Mammary epithelial cell (primary cell): ENCODE measurements at regions of chr12 and their contacts with region 1.

Region 1: DNA sequence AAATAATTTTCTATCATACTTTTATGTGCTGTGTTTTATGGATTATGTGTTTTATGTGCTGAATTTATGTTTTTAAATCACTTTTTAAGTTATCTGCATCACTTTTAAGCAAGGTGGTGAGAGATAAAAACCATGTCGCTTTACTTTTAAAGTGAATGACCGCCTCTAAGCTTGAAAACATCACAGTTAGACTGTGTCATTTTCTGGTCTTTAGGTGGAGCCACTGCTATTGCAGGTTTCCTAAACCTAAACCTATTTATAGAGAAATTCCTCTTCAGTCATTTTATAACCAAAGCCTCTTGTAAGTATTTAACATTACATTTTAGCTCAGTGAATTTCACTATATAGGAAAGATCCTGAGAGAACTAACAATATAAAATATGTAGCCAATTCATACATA is 21.0 kb upstream of the MDM2 start:
- DNase-seq: no peak
- H3K4me3 ChIP-seq: no peak overlapping the region
- H3K27ac ChIP-seq: peak overlapping the region; percentile 80
- H3K4me1 ChIP-seq: peaks cover 47% of the 10 kb centered on the region
- H3K27me3 ChIP-seq: no peaks in the 10 kb centered on the region
- CTCF ChIP-seq: peak in 1 of 2 donors; percentile 16

Region 2: GRCh38 chr12:68745904-68746571 is 40.9 kb before region 1 on chr12 and contains the start of gene SLC35E3:
- CTCF ChIA-PET with region 1: no interaction called
- dilution Hi-C with region 1: no loop called
- in situ Hi-C with region 1: no loop called
- intact Hi-C with region 1: loop called (anchors 1 kb)
- DNase-seq: peak; percentile 89
- H3K4me3 ChIP-seq: peak within 1 kb of the TSS; percentile 63 to 90 (median 85)
- H3K27ac ChIP-seq: peak within 1 kb of the TSS; percentile 62
- H3K4me1 ChIP-seq: peaks cover 14% of the 10 kb centered on the region
- H3K27me3 ChIP-seq: no peaks in the 10 kb centered on the region
- CTCF ChIP-seq: no peak
- total RNA-seq, gene SLC35E3: 5.5 to 12.4 TPM

Region 3: GRCh38 chr12:68768431-68768939 is 18.4 kb before region 1 on chr12:
- CTCF ChIA-PET with region 1: interaction called, 16 read pairs
- dilution Hi-C with region 1: no loop called
- in situ Hi-C with region 1: no loop called
- intact Hi-C with region 1: no loop called
- DNase-seq: no peak
- H3K4me3 ChIP-seq: no peak overlapping the region
- H3K27ac ChIP-seq: no peak overlapping the region
- H3K4me1 ChIP-seq: no peaks in the 10 kb centered on the region
- H3K27me3 ChIP-seq: no peaks in the 10 kb centered on the region
- CTCF ChIP-seq: no peak